Adrenal gland (tissue), 19 donors: ENCODE measurements at regions of chr7 and their contacts with region 1.

Region 1: DNA sequence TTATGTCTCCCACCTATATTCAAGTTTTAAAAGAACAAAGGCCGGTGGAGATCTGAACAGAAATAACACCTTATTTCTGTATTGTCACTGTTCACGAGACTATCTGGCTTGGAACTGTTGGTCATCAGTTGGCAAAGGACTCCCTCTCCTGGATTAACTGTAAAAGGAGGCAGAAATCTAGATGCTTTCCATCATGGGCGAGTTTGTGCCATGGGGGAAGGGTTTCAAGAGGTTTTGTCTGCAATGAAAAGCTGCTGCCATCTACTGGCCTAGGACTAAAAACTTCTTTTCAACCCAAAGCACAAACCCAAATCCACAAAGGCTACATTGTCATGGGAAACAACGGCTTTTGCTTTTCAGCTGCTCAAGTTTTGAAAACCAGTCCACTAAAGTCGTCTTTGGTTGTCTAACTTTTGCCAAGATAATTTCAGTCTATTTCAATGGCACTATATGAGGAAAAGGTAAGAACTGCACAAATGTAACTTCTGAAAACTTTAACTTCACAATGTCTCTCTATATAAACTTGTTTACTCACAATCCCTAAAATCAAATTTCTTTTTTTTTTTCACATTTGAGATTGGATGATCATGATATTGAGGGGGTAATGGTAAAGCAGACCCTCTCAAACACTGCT is 196.8 kb downstream of the SKAP2 start:
- DNase-seq: peak; percentile 84 to 94 (median 91)
- H3K4me3 ChIP-seq: no peak overlapping the region
- H3K27ac ChIP-seq: no peak overlapping the region
- H3K4me1 ChIP-seq: peaks cover 0 to 11% of the 10 kb centered on the region in 2 donors
- H3K27me3 ChIP-seq: no peaks in the 10 kb centered on the region
- CTCF ChIP-seq: peak; percentile 46 to 97 (median 92)
- POLR2A ChIP-seq: no peak

Region 2: GRCh38 chr7:25894902-25895791 is 772.5 kb before region 1 on chr7:
- intact Hi-C with region 1: loop called in 1 of 2 experiments (anchors 10 kb)
- DNase-seq: peak; percentile 68 to 86 (median 79)
- H3K4me3 ChIP-seq: peak overlapping the region in 2 of 4 donors; percentile 14 to 52
- H3K27ac ChIP-seq: peak overlapping the region in 3 of 5 donors; percentile 55 to 79 (median 56)
- H3K4me1 ChIP-seq: peaks cover 3 to 21% of the 10 kb centered on the region in 2 donors
- H3K27me3 ChIP-seq: no peaks in the 10 kb centered on the region
- CTCF ChIP-seq: peak; percentile 55 to 73 (median 66)
- POLR2A ChIP-seq: peak in 1 of 2 donors; percentile 32

Region 3: GRCh38 chr7:26376175-26376917 is 291.3 kb before region 1 on chr7:
- intact Hi-C with region 1: loop called (anchors 5 kb)
- DNase-seq: peak; percentile 38 to 83 (median 65)
- H3K4me3 ChIP-seq: peak overlapping the region in 3 of 4 donors; percentile 50 to 64 (median 50)
- H3K27ac ChIP-seq: peak overlapping the region in 4 of 5 donors; percentile 49 to 76 (median 67)
- H3K4me1 ChIP-seq: peaks cover 0 to 8% of the 10 kb centered on the region in 2 donors
- H3K27me3 ChIP-seq: peaks cover 3% of the 10 kb centered on the region
- CTCF ChIP-seq: peak in 1 of 6 experiments; percentile 0
- POLR2A ChIP-seq: peak in 1 of 2 donors; percentile 24

Region 4: DNA sequence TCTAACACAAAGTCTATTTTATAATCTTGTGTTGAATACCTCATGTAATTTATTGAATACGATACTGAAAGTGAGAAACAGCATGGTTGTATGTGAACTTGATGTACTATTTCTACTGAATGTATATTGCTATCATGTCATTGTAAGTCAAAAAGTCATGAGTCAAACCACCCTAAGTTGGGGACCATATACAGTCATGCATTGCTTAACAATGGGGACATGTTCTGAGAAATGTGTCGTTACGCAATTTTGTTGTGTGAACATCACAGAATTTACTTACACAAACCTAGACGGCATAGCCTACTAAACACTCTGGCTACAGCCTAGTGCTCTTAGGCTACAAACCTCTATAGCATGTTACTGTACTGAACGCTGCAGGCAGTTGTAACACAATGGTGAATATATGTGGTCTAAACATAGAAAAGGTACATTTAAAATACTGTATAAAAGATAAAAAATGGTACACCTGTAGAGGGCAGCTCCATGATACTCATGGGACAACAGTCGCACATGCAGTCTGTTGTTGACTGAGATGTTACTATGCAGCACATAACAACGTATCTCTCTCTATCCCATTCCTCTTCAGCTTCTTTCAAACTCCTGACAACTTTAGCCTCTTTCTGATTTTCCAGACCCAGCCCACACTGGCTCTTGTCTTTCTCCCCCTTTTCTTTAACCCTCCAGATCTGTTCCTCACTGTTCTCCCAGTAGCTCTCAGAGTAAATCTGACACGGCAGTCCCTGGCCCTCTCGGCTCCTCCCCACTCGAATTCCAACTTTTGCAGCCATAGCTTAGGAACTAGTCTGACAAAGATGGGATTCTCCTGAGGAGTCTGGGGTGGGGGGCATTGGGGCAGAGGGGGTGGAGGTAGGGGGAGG is 285.9 kb before region 1 on chr7:
- intact Hi-C with region 1: loop called (anchors 5 kb)
- DNase-seq: no peak
- H3K4me3 ChIP-seq: no peak overlapping the region
- H3K27ac ChIP-seq: no peak overlapping the region
- H3K4me1 ChIP-seq: peaks cover 0 to 4% of the 10 kb centered on the region in 2 donors
- H3K27me3 ChIP-seq: no peaks in the 10 kb centered on the region
- CTCF ChIP-seq: no peak
- POLR2A ChIP-seq: no peak